AG04449 (cell line): ENCODE measurements at regions of chr7 and their contacts with region 1.

Region 1: GRCh38 chr7:39465055-39465929 is 100.9 kb upstream of the YAE1 start:
- DNase-seq: peak; percentile 7
- H3K4me3 ChIP-seq: no peak overlapping the region
- CTCF ChIP-seq: peak; percentile 73

Region 2: GRCh38 chr7:38796626-38797501 is 668.4 kb before region 1 on chr7:
- CTCF ChIA-PET with region 1: interaction called, 21 read pairs
- POLR2A ChIA-PET with region 1: no interaction called
- DNase-seq: no peak
- H3K4me3 ChIP-seq: no peak overlapping the region
- CTCF ChIP-seq: peak; percentile 57

Region 3: DNA sequence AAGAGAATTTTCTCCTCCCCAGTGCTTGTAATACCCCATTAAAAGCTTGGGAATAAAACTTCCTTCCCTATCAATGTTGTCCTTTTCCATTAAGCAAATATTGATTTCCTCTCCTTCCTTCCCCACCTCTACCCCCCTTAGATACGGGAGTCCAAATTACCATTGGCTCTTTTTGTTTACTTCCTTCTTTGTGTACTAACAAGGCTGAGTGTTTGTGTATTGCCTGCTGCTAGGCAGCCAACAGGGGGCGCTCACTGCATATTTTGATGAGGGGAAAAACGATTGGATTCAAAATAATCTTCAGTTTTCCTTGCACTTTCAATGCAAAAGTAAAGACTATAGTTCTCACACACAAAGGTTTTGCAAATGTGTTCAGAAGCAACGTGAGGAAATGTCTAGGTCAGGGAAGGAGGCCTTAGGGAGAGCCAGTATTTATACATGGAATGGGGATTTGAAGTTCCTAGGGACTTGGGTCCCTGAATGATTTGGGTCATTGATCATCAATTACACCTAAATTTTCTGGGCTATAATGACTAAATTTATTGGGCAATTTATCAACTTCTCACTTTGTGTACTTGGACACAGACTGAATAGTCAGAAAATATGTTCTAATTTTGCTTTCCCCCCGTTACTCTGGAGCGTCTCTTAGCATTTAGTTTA is 532.7 kb before region 1 on chr7:
- CTCF ChIA-PET with region 1: interaction called, 19 read pairs
- POLR2A ChIA-PET with region 1: no interaction called
- DNase-seq: no peak
- H3K4me3 ChIP-seq: no peak overlapping the region
- CTCF ChIP-seq: peak; percentile 74

Region 4: DNA sequence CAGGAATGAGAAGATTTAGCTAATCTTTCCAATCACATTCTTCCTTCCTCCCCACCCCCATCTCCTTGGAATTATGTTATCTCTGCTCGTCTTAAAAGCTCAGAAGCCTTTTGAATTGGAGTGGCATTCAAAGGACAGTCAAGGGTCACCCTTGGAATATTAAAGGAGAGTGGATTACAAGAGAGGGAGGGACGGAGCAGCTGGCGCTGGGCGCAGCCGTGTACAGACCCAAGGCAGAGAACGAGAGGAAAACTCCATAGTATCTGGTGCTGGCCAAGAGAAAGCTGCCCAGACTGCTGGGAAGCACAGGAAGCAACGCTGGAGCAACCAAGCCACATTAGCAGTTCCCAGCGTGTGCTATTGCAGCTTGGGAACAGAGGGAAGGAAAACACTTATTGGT is 391.9 kb before region 1 on chr7:
- CTCF ChIA-PET with region 1: interaction called, 35 read pairs
- POLR2A ChIA-PET with region 1: no interaction called
- DNase-seq: no peak
- H3K4me3 ChIP-seq: no peak overlapping the region
- CTCF ChIP-seq: no peak

Region 5: DNA sequence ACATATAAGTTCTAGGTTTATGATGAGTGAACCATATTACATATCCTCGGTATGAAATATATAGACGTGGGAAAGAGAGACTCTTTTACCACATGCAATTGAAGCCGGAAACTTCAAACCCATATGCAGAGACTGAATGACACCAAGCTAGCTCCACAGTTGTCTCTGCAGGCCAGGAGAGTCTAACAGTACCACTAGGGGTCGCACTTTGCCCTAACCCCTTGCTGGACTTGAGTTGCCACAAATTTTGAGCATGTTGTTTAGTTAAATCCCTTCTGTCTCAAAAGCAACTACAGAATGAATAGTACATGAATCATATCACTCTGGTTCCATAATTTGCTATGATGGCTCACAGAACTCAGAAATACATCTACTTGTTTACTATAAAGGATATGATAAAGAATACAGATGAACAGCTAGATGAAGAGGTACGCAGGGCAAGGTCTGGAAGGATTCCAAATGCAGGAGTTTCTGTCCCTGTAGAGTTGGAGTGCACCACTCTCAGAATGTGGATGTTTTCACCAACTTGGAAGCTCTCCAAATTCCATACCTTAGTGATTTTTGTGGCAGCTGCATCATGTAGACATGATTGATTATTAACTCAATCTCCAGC is 11.4 kb before region 1 on chr7:
- CTCF ChIA-PET with region 1: interaction called, 26 read pairs
- POLR2A ChIA-PET with region 1: no interaction called
- DNase-seq: no peak
- H3K4me3 ChIP-seq: no peak overlapping the region
- CTCF ChIP-seq: peak; percentile 78